OCI-LY7 (cell line): ENCODE measurements at regions of chr17 and their contacts with region 1.

Region 1: GRCh38 chr17:73639932-73640331 is 4.3 kb downstream of the SDK2 start:
- DNase-seq: no peak
- H3K4me3 ChIP-seq: no peak overlapping the region
- H3K27ac ChIP-seq: no peak overlapping the region
- H3K4me1 ChIP-seq: peaks cover 6% of the 10 kb centered on the region
- CTCF ChIP-seq: no peak

Region 2: DNA sequence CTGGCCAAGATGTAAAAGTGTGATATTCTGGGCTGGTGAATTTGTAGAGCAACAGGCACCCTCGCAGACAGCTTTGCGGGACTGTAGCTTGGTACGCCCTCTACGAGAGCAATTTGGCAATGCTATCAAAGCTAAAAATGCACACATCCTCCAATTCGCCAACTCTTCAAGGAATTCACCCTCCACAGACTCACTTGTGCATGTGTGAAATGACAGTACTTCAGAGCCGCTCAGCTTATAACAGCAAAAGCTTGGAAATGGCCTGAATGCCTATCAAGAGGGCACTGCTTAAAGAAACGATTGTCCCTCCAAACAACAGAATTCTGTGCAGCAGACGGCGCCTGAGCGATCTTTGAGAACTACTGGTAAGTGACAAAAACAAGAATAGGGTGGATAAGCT is 126.5 kb before region 1 on chr17:
- CTCF ChIA-PET with region 1: no interaction called
- POLR2A ChIA-PET with region 1: interaction called, 10 read pairs
- intact Hi-C with region 1: no loop called
- DNase-seq: no peak
- H3K4me3 ChIP-seq: no peak overlapping the region
- H3K27ac ChIP-seq: no peak overlapping the region
- H3K4me1 ChIP-seq: no peaks in the 10 kb centered on the region
- CTCF ChIP-seq: no peak

Region 3: GRCh38 chr17:73613271-73614233 is 26.4 kb before region 1 on chr17:
- CTCF ChIA-PET with region 1: no interaction called
- POLR2A ChIA-PET with region 1: no interaction called
- intact Hi-C with region 1: no loop called
- DNase-seq: no peak
- H3K4me3 ChIP-seq: no peak overlapping the region
- H3K27ac ChIP-seq: no peak overlapping the region
- H3K4me1 ChIP-seq: peaks cover 9% of the 10 kb centered on the region
- CTCF ChIP-seq: no peak

Region 4: GRCh38 chr17:73625991-73626673 is 13.8 kb before region 1 on chr17:
- CTCF ChIA-PET with region 1: no interaction called
- POLR2A ChIA-PET with region 1: no interaction called
- intact Hi-C with region 1: no loop called
- DNase-seq: no peak
- H3K4me3 ChIP-seq: no peak overlapping the region
- H3K27ac ChIP-seq: no peak overlapping the region
- H3K4me1 ChIP-seq: no peaks in the 10 kb centered on the region
- CTCF ChIP-seq: no peak